ENCODE measurements at regions of chr11 and their contacts with region 1.

Region 1: DNA sequence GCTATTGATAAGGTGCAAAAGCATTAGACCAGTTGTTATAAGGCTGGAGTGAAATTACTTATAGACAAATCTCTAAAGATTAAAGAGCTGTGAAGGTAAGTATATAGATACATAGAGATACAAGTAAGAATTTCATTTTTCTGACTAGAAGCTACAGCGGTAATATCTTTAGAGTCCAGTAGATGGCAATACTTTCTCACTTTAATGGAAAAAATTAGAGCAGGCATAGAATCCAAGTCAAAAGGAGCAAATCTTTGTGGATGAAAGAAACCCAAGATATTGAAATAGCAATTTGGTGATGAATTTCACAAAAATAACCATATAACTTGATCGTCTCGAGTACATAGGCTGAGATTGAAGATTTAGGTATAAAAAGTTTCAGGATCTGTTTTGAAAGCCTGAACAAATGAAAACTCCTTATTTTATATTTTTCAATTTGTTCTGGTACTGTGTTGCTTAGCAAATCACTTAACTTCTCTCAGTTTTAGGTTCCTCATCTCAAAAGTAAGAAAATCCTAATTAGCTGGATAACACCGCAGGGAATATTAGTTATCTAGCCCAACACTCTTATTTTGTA is 81.9 kb downstream of the UVRAG start:
- DNase-seq: peak; percentile 82
- ATAC-seq: peak; percentile 63; the same call in 1 of the 2 replicates
- H3K4me3 ChIP-seq: no peak overlapping the region
- H3K27ac ChIP-seq: no peak overlapping the region
- H3K4me1 ChIP-seq: no peaks in the 10 kb centered on the region
- H3K27me3 ChIP-seq: no peaks in the 10 kb centered on the region
- CTCF ChIP-seq: peak; percentile 93

Region 2: DNA sequence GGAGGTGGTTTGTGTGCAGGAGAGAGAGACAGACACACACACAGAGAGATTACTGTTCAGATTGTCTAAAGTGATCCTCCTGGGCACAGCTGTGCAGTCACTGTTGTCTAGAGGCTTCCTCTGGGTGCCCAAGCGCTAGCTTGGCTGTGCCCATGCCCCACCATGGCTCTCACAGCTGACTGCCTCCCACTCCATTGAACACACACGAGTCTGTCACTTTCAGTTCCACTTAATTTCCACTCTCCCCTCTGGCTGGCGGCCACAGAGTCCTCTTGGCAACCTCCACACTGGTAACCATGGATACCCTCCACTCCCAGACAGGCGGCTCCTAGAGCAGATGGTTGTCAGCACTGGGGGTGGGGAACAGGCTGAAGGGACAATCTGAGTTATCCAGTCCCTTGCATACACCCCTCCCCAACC is 257.2 kb before region 1 on chr11:
- CTCF ChIA-PET with region 1: no interaction called
- POLR2A ChIA-PET with region 1: no interaction called
- intact Hi-C with region 1: no loop called
- DNase-seq: no peak
- ATAC-seq: no peak
- H3K4me3 ChIP-seq: no peak overlapping the region
- H3K27ac ChIP-seq: no peak overlapping the region
- H3K4me1 ChIP-seq: no peaks in the 10 kb centered on the region; the same call in 1 of the 2 replicates
- H3K27me3 ChIP-seq: no peaks in the 10 kb centered on the region
- CTCF ChIP-seq: no peak

Region 3: DNA sequence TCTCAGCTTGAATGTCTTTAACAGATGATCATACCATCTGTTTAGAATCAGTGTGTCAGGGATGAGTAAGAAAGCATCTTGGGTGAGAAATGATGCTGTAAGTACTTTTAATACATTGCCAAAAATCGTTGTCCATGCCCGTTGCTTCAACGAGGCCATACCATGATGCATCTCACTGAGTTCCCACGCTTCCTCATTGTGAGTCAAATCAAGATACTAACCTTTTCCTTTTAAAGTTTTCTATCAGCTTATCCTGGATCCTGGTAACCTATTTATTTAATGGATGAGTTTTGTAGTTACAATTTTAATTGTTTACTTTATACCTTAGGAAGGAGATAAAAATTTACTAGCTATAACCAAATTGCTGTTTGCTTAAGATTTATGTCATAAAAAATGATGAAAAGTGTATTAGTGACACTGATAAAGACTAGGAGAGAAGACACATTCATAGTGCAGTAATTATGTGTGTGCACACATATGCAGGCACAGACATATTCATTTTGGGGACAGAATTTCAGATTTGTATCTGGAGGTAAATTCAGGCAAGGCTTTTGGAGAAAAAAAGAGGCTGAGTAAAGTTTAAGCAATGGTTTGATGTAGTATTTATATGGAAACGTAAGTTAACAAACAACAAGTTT is 72.9 kb after region 1 on chr11:
- CTCF ChIA-PET with region 1: no interaction called
- POLR2A ChIA-PET with region 1: no interaction called
- intact Hi-C with region 1: loop called (anchors 2 kb)
- DNase-seq: peak; percentile 94
- ATAC-seq: peak; percentile 82
- H3K4me3 ChIP-seq: no peak overlapping the region; the same call in 1 of the 2 replicates
- H3K27ac ChIP-seq: peak overlapping the region; percentile 94
- H3K4me1 ChIP-seq: peaks cover 41% of the 10 kb centered on the region
- H3K27me3 ChIP-seq: no peaks in the 10 kb centered on the region
- CTCF ChIP-seq: no peak

Region 4: GRCh38 chr11:75996523-75997442 is 99.9 kb after region 1 on chr11:
- CTCF ChIA-PET with region 1: interaction called, 11 read pairs
- POLR2A ChIA-PET with region 1: no interaction called
- intact Hi-C with region 1: no loop called
- DNase-seq: no peak
- ATAC-seq: no peak
- H3K4me3 ChIP-seq: no peak overlapping the region
- H3K27ac ChIP-seq: no peak overlapping the region
- H3K4me1 ChIP-seq: no peaks in the 10 kb centered on the region
- H3K27me3 ChIP-seq: no peaks in the 10 kb centered on the region
- CTCF ChIP-seq: no peak

Region 5: GRCh38 chr11:76152086-76152681 is 255.3 kb after region 1 on chr11:
- CTCF ChIA-PET with region 1: interaction called, 17 read pairs
- POLR2A ChIA-PET with region 1: no interaction called
- intact Hi-C with region 1: loop called (anchors 1 kb)
- DNase-seq: peak; percentile 94
- ATAC-seq: peak; percentile 55
- H3K4me3 ChIP-seq: no peak overlapping the region
- H3K27ac ChIP-seq: no peak overlapping the region
- H3K4me1 ChIP-seq: peaks cover 37% of the 10 kb centered on the region
- H3K27me3 ChIP-seq: no peaks in the 10 kb centered on the region
- CTCF ChIP-seq: peak; percentile 98

Region 6: DNA sequence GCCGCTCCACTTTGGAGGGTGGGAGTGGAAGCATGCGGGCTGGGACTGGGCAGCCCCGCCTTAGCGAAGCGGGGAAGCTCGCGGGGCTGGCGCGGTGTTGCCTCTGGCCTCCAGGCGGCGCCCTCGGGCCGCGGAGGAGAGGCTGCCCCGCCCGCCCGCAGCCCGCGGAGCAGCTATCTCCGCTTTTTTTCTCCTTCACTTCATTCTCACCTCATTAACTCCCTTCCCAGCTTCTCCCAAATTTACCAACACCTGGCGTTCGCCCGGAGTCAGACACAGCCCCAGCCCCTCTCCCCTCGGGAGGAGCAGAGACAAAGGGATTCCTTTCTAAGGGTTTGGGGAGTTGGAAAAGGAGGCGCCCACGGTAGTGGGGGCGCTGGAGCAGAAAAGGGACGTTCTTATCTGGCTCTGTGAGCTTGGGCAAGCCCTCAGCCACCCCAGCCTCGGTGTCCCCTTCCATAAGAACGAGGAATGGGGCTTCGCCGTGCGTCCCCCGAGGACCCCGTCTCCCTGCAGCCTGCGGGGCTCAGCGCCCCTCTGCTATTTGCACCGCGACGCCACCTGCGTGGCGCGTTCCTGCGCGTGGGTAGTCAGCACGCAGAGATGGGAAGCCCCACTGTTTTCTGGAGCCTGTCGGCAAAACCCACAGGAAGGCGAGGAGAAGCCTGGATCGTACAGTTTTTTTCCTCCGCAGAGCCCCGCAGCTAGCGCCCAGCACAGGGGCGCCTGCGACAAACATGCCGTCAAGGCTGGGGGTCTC is 310.9 kb after region 1 on chr11:
- CTCF ChIA-PET with region 1: interaction called, 4 read pairs
- POLR2A ChIA-PET with region 1: no interaction called
- intact Hi-C with region 1: loop called (anchors 2 kb)
- DNase-seq: peak; percentile 93
- ATAC-seq: peak; percentile 56
- H3K4me3 ChIP-seq: peak overlapping the region; percentile 67
- H3K27ac ChIP-seq: no peak overlapping the region
- H3K4me1 ChIP-seq: peaks cover 32% of the 10 kb centered on the region
- H3K27me3 ChIP-seq: peaks cover 49% of the 10 kb centered on the region
- CTCF ChIP-seq: peak; percentile 94